Cardiac septum (tissue), 1 donor: ENCODE measurements at regions of chr11 and their contacts with region 1.

Region 1: DNA sequence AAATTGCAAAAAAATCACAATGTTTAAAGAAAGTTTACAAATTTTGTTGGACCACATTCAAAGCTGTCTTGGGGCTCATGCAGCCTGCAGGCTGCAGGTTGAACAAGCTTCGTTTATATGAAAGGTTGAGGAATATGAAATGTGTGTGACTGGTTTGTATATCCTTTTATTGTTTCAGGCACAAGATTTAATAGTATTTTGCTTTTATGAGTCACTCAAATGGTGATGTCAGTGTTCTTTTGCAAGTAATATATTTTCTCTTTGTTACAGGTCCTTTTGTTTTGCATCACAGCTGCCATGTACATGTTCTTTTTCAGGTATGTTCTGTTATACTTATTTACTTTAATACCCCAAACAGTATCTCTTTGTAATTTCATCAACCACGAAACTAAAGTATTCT is 198.6 kb downstream of the TMEM135 start:
- DNase-seq: no peak

Region 2: GRCh38 chr11:87083029-87083428 is 153.3 kb before region 1 on chr11:
- intact Hi-C with region 1: no loop called
- DNase-seq: no peak

Region 3: DNA sequence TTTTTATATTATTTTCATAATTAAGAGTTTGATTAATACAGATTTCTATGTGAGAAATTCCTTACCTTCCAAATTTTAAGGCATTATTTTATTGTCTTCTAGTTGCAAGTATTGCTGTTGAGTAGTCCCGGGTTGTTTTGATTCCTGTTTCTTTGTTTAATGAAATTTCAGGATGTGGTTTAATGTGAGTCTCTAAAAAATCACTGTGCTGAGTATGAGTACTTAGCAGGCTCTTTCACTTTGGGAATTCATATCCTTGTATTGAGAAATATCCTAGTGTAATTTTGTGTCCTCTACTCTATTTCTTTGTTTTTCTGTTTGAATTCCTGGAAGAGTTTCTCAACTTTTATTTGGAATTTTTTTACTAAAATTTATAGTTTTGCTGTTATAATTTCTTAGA is 85.4 kb before region 1 on chr11:
- intact Hi-C with region 1: loop called (anchors 5 kb)
- DNase-seq: no peak

Region 4: GRCh38 chr11:87290304-87290922 is 54.0 kb after region 1 on chr11:
- intact Hi-C with region 1: no loop called
- DNase-seq: no peak